Endothelial cell of umbilical vein (primary cell): ENCODE measurements at regions of chr18 and their contacts with region 1.

Region 1: DNA sequence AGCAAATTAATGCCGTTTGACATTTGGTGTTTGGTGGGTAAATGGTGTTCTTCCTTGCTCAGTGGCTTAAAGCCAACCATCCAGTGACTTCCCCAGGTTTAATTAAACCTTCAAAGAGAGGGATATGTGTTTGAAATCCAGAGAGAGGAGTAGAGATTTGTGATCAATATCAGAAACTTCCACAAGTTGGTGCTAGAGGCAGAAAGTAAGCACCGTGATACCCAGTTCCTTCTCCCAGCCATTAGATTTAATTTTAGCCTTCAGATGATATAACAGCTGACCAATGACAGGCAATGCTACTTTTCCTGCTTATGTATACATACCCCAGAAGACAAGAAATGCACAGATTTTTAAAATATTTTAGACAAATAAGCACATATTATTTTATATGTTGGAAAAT is 398.5 kb downstream of the CDH2 start:
- DNase-seq: peak; percentile 32
- H3K4me3 ChIP-seq: no peak overlapping the region
- H3K27ac ChIP-seq: no peak overlapping the region
- H3K4me1 ChIP-seq: no peaks in the 10 kb centered on the region
- H3K27me3 ChIP-seq: peaks cover 1 to 8% of the 10 kb centered on the region in 2 experiments
- CTCF ChIP-seq: peak; percentile 11 to 42
- POLR2A ChIP-seq: no peak

Region 2: DNA sequence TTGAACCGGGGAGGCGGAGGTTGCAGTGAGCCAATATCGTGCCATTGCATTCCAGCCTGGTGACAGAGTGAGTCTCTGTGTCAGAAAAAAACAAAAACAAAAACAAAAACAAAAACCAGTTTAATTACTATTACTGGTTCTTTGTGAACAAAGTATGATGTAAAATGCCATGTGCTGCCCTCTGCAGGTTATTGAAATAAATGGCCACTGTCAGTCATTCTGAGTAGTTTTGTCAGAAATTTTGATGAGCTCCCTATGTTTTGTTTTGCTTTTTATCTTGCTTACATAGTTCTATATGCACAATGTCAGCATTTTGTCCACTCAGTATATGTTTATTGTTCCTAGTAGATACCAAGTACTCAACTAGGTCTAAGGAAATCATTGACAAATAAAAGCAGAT is 169.7 kb before region 1 on chr18:
- CTCF ChIA-PET with region 1: no interaction called
- POLR2A ChIA-PET with region 1: no interaction called
- dilution Hi-C with region 1: no loop called
- intact Hi-C with region 1: no loop called
- DNase-seq: peak; percentile 11
- H3K4me3 ChIP-seq: no peak overlapping the region
- H3K27ac ChIP-seq: no peak overlapping the region
- H3K4me1 ChIP-seq: no peaks in the 10 kb centered on the region
- H3K27me3 ChIP-seq: no peaks in the 10 kb centered on the region
- CTCF ChIP-seq: peak; percentile 14 to 47
- POLR2A ChIP-seq: no peak

Region 3: DNA sequence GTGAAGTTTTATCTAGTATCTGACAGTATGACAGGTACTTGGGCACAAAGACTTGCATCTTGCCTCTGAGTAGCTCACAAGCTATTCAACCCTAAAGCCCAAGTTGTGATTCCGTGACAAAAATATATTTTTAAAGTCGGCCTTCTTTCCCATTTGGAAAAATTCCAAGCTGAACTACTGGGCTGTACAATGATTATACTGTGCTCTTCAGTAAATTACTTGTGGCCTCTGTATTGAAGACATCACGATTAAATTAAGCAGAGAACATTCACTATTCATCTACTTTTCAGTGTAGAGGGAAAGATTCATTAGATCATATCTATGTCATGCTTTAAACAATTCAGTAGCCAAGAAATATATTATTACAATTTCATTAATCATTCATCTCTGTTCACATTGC is 116.3 kb after region 1 on chr18:
- CTCF ChIA-PET with region 1: no interaction called
- POLR2A ChIA-PET with region 1: no interaction called
- dilution Hi-C with region 1: no loop called
- intact Hi-C with region 1: loop called (anchors 5 kb)
- DNase-seq: no peak
- H3K4me3 ChIP-seq: no peak overlapping the region
- H3K27ac ChIP-seq: no peak overlapping the region
- H3K4me1 ChIP-seq: no peaks in the 10 kb centered on the region
- H3K27me3 ChIP-seq: peaks cover 0 to 2% of the 10 kb centered on the region in 2 experiments
- CTCF ChIP-seq: no peak
- POLR2A ChIP-seq: no peak